Calu3 (cell line): ENCODE measurements at regions of chr19 and their contacts with region 1.

Region 1: DNA sequence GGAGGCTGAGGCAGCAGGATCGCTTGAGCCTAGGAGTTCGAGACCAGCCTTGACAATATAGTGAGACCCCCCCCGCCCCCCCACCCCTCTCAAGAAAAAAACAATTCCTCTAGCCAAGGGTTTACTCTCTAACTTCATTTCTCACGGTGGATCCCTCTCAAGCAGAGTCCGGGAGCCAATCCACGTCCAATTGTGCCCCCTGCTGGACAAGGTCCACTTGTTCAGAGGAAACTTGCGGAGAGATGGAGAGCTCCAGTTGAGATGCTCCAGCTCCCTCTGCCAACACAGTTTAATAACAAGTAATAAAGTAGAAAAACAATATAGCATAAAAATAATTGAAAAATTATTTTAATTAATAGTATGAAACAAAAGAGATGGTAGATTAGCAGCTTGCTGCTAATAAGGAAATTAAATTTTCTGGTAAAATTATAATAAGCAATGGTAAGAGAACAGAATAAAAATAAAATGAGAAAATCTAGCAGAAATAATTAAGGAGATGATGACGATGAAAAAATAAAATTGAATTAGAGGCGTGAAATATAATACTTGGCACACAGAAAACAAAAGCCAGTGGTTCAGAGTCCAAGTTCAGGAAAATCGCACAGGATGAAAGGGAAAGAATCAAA is 14.5 kb upstream of the SIGLEC14 start:
- DNase-seq: peak; percentile 82
- H3K4me3 Mint-ChIP-seq: no peak overlapping the region
- H3K27ac Mint-ChIP-seq: no peak overlapping the region
- H3K4me1 Mint-ChIP-seq: peaks cover 10% of the 10 kb centered on the region
- H3K27me3 Mint-ChIP-seq: peaks cover 59% of the 10 kb centered on the region
- CTCF ChIP-seq: peak; percentile 53

Region 2: DNA sequence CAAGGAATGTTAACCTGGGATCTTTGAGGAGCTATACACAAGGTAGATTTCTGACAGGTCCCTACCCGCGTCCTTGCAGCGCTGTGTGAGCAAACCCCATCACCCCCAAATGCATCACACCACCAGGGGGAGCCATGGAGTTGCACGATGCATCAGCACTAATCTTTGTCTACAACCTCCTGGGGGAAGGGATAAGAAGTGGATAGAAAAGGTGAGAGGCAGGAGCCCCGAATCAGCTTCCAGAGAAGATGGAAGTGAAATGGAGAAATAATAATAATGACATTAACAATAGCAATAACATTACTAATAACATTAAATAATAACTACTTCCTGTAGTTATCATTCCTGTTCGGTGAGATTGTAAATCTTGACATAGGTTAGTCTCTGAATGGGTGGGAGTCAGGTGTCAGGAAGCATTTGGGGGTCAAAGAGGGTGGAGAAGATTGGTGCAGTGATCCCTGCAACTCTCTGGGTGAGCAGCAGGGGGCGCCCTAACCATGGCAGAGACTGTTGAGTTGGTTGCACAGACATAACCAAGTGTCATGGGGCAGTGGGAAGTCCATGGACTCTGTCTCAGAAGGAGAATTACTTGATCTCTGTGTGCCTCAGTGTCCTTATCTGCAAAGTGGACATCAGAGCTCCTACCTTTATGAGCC is 502.5 kb before region 1 on chr19:
- CTCF ChIA-PET with region 1: no interaction called
- intact Hi-C with region 1: loop called (anchors 5 kb)
- DNase-seq: peak; percentile 88
- H3K4me3 Mint-ChIP-seq: no peak overlapping the region
- H3K27ac Mint-ChIP-seq: no peak overlapping the region
- H3K4me1 Mint-ChIP-seq: no peaks in the 10 kb centered on the region
- H3K27me3 Mint-ChIP-seq: peaks cover 100% of the 10 kb centered on the region
- CTCF ChIP-seq: peak; percentile 83

Region 3: GRCh38 chr19:51398096-51398704 is 262.9 kb before region 1 on chr19:
- CTCF ChIA-PET with region 1: interaction called, 4 read pairs
- intact Hi-C with region 1: loop called (anchors 1 kb)
- DNase-seq: no peak
- H3K4me3 Mint-ChIP-seq: no peak overlapping the region
- H3K27ac Mint-ChIP-seq: no peak overlapping the region
- H3K4me1 Mint-ChIP-seq: peaks cover 10% of the 10 kb centered on the region
- H3K27me3 Mint-ChIP-seq: no peaks in the 10 kb centered on the region
- CTCF ChIP-seq: peak; percentile 21

Region 4: GRCh38 chr19:51473009-51473707 is 187.9 kb before region 1 on chr19:
- CTCF ChIA-PET with region 1: interaction called, 84 read pairs
- intact Hi-C with region 1: loop called (anchors 1 kb)
- DNase-seq: peak; percentile 92
- H3K4me3 Mint-ChIP-seq: no peak overlapping the region
- H3K27ac Mint-ChIP-seq: no peak overlapping the region
- H3K4me1 Mint-ChIP-seq: peaks cover 44% of the 10 kb centered on the region
- H3K27me3 Mint-ChIP-seq: peaks cover 4% of the 10 kb centered on the region
- CTCF ChIP-seq: peak; percentile 97

Region 5: DNA sequence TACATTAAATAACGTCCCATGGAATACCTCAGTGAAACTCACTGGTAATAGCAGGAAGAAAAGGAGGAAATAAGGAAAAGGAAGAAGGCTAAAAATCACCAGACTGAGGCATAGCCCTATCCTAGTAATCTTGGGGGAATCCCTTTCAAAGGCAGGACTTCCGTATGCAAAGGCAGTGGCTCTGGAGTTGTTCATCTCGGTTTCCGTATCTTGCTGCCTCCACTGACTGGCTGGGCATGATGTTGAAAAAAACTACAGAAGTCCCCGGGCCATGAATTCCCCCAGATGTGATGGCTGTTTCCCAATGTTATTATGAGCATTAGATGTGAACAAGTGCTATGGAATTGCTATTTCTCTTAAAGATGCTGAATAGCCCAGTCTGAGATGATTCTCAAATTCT is 105.4 kb after region 1 on chr19:
- CTCF ChIA-PET with region 1: no interaction called
- intact Hi-C with region 1: no loop called
- DNase-seq: no peak
- H3K4me3 Mint-ChIP-seq: no peak overlapping the region
- H3K27ac Mint-ChIP-seq: no peak overlapping the region
- H3K4me1 Mint-ChIP-seq: no peaks in the 10 kb centered on the region
- H3K27me3 Mint-ChIP-seq: peaks cover 29% of the 10 kb centered on the region
- CTCF ChIP-seq: no peak

Region 6: GRCh38 chr19:51777570-51778462 is 116.7 kb after region 1 on chr19:
- CTCF ChIA-PET with region 1: interaction called, 10 read pairs
- intact Hi-C with region 1: loop called (anchors 2 kb)
- DNase-seq: peak; percentile 74
- H3K4me3 Mint-ChIP-seq: no peak overlapping the region
- H3K27ac Mint-ChIP-seq: no peak overlapping the region
- H3K4me1 Mint-ChIP-seq: no peaks in the 10 kb centered on the region
- H3K27me3 Mint-ChIP-seq: peaks cover 35% of the 10 kb centered on the region
- CTCF ChIP-seq: no peak